K562 (cell line): ENCODE measurements at regions of chr6 and their contacts with region 1.

Region 1: GRCh38 chr6:117482240-117483003 is at the start of gene DCBLD1:
- DNase-seq: peak; percentile 88 to 92 (median 90)
- ATAC-seq: peak; percentile 88
- H3K4me3 ChIP-seq: peak within 1 kb of the TSS; percentile 76
- H3K27ac ChIP-seq: peak within 1 kb of the TSS; percentile 80
- H3K4me1 ChIP-seq: peaks cover 8 to 21% of the 10 kb centered on the region in 2 experiments; a peak in 4 of 5 replicates
- H3K27me3 ChIP-seq: peaks cover 0 to 7% of the 10 kb centered on the region in 2 experiments; a peak in 2 of 5 replicates
- CTCF ChIP-seq: peak in 2 of 3 experiments; percentile 1 to 9; a peak in 1 of 6 replicates
- EP300 ChIP-seq: no peak
- POLR2A ChIP-seq: no peak; the same call in 1 of the 2 replicates
- RAD21 ChIP-seq: no peak
- polyA plus RNA-seq, gene DCBLD1: 0.80 to 0.87 TPM

Region 2: DNA sequence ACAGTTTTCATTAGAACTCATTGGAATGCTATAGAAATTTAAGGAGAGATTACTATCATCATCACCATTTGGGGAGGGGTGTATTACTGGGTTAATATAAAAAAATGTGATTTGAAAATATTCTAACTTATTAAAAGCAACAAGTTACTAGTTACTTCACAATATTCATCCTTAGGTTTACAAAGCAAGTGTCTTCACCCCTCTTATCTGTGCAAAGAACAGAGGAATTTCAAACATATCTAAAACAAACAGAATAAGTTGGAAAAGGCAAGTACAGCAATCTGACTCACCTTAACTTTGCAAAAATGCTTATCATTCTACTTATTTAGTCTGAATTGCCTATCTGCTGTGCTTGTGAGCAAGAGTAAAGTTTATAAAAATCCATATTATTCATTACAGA is 32.9 kb after region 1 on chr6:
- CTCF ChIA-PET with region 1: no interaction called
- POLR2A ChIA-PET with region 1: interaction called, 3 read pairs
- in situ Hi-C with region 1: no loop called
- intact Hi-C with region 1: loop called (anchors 5 kb)
- DNase-seq: no peak
- ATAC-seq: no peak
- H3K4me3 ChIP-seq: no peak overlapping the region
- H3K27ac ChIP-seq: no peak overlapping the region
- H3K4me1 ChIP-seq: no peaks in the 10 kb centered on the region
- H3K27me3 ChIP-seq: no peaks in the 10 kb centered on the region
- CTCF ChIP-seq: no peak
- EP300 ChIP-seq: no peak
- POLR2A ChIP-seq: no peak
- RAD21 ChIP-seq: no peak

Region 3: DNA sequence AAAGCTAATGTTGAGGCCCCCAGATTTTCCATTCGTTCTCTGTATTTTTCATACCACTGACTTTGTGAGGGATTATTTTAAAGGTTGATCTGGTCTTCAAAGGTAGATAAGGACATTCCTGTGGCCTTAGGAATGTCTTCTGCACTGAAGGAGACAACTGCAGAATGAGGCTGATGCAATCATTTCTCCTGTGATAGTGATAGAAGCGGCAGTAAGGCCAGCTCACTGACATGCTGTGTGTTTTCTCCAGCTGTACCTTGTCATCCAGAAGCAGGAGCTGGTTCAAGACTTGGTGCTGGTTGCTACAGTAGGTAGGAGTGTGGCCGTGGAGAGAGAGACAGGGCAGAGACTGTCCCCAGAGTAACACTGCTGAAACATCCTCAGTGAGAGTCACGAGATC is 53.9 kb after region 1 on chr6:
- CTCF ChIA-PET with region 1: no interaction called
- POLR2A ChIA-PET with region 1: interaction called, 4 read pairs
- in situ Hi-C with region 1: no loop called
- intact Hi-C with region 1: loop called (anchors 5 kb)
- DNase-seq: no peak
- ATAC-seq: peak; percentile 90
- H3K4me3 ChIP-seq: no peak overlapping the region
- H3K27ac ChIP-seq: peak overlapping the region; percentile 24; the same call in 1 of the 3 replicates
- H3K4me1 ChIP-seq: peaks cover 0 to 15% of the 10 kb centered on the region in 2 experiments; a peak in 2 of 5 replicates
- H3K27me3 ChIP-seq: no peaks in the 10 kb centered on the region
- CTCF ChIP-seq: no peak
- EP300 ChIP-seq: peak; percentile 36; the same call in 1 of the 2 replicates
- POLR2A ChIP-seq: no peak
- RAD21 ChIP-seq: no peak; a peak in 2 of 4 replicates

Region 4: GRCh38 chr6:117549611-117550010 is 67.2 kb after region 1 on chr6:
- CTCF ChIA-PET with region 1: interaction called, 7 read pairs
- POLR2A ChIA-PET with region 1: interaction called, 3 read pairs
- in situ Hi-C with region 1: loop called (anchors 5 kb)
- intact Hi-C with region 1: no loop called
- DNase-seq: no peak
- ATAC-seq: no peak
- H3K4me3 ChIP-seq: no peak overlapping the region
- H3K27ac ChIP-seq: no peak overlapping the region
- H3K4me1 ChIP-seq: peaks cover 0 to 16% of the 10 kb centered on the region in 2 experiments; a peak in 3 of 5 replicates
- H3K27me3 ChIP-seq: no peaks in the 10 kb centered on the region
- CTCF ChIP-seq: no peak
- EP300 ChIP-seq: no peak
- POLR2A ChIP-seq: no peak
- RAD21 ChIP-seq: no peak

Region 5: DNA sequence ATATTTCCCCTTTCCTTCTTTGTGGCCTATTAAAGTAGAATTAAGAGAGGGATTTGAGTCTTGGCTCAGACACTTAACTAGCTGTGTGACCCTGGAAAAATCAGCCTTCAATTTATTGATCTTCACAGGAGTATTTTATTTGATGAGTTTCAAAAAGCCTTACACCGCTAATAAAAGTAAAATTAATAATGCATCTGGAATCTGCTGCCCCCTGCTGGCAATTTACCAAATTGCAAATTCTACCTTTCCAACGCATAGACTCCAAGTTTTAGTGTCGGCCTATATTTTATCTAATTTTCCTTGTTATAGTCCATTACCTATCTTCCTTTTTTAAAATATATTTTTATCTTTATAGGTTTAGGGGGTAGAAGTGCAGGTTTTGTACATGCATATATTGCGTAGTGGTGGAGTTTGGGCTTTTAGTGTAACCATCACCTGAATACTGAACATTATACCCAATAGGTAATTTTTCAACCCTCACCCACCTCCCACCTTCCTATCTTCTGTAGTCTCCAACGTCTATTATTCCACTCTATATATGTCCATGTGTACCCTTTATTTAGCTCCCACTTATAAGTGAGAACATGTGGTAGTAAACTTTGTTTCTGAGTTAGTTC is 73.6 kb after region 1 on chr6:
- CTCF ChIA-PET with region 1: interaction called, 15 read pairs
- POLR2A ChIA-PET with region 1: interaction called, 3 read pairs
- in situ Hi-C with region 1: loop called (anchors 5 kb)
- intact Hi-C with region 1: loop called (anchors 1 kb)
- DNase-seq: peak in 3 of 4 experiments; percentile 30 to 51 (median 33)
- ATAC-seq: peak; percentile 45
- H3K4me3 ChIP-seq: no peak overlapping the region
- H3K27ac ChIP-seq: no peak overlapping the region
- H3K4me1 ChIP-seq: peaks cover 0 to 8% of the 10 kb centered on the region in 2 experiments; a peak in 3 of 5 replicates
- H3K27me3 ChIP-seq: no peaks in the 10 kb centered on the region
- CTCF ChIP-seq: peak; percentile 50 to 81 (median 55); a peak in 5 of 6 replicates
- EP300 ChIP-seq: no peak
- POLR2A ChIP-seq: no peak
- RAD21 ChIP-seq: peak; percentile 81 to 83

Region 6: GRCh38 chr6:117674991-117675657 is 192.7 kb after region 1 on chr6 and contains the start of gene NUS1:
- CTCF ChIA-PET with region 1: no interaction called
- POLR2A ChIA-PET with region 1: interaction called, 3 read pairs
- in situ Hi-C with region 1: no loop called
- intact Hi-C with region 1: loop called (anchors 10 kb)
- DNase-seq: peak; percentile 94 to 98 (median 95)
- ATAC-seq: peak; percentile 93
- H3K4me3 ChIP-seq: peak within 1 kb of the TSS; percentile 89
- H3K27ac ChIP-seq: peak within 1 kb of the TSS; percentile 91
- H3K4me1 ChIP-seq: peaks cover 8 to 33% of the 10 kb centered on the region in 2 experiments
- H3K27me3 ChIP-seq: no peaks in the 10 kb centered on the region
- CTCF ChIP-seq: peak; percentile 84 to 85 (median 85)
- EP300 ChIP-seq: no peak
- POLR2A ChIP-seq: peak; percentile 81
- RAD21 ChIP-seq: 0 out of 4 replicates have a peak, but pooled peaks of 1 of the 2 experiments have one; percentile 16
- polyA plus RNA-seq, gene NUS1: 21.7 to 22.9 TPM

Region 7: GRCh38 chr6:117829594-117830319 is 347.3 kb after region 1 on chr6:
- CTCF ChIA-PET with region 1: interaction called, 4 read pairs
- POLR2A ChIA-PET with region 1: no interaction called
- in situ Hi-C with region 1: no loop called
- intact Hi-C with region 1: loop called (anchors 2 kb)
- DNase-seq: peak in 2 of 4 experiments; percentile 14 to 19
- ATAC-seq: peak; percentile 69; the same call in 2 of the 3 replicates
- H3K4me3 ChIP-seq: no peak overlapping the region
- H3K27ac ChIP-seq: no peak overlapping the region
- H3K4me1 ChIP-seq: no peaks in the 10 kb centered on the region
- H3K27me3 ChIP-seq: no peaks in the 10 kb centered on the region
- CTCF ChIP-seq: peak; percentile 39 to 47 (median 43); a peak in 5 of 6 replicates
- EP300 ChIP-seq: no peak
- POLR2A ChIP-seq: no peak
- RAD21 ChIP-seq: no peak